RWPE1 (cell line): ENCODE measurements at regions of chr13 and their contacts with region 1.

Region 1: GRCh38 chr13:25329706-25330105 is 28.3 kb downstream of the NUP58 start:
- DNase-seq: no peak
- H3K27ac ChIP-seq: peak overlapping the region; percentile 42; the same call in 1 of the 2 replicates
- CTCF ChIP-seq: no peak

Region 2: DNA sequence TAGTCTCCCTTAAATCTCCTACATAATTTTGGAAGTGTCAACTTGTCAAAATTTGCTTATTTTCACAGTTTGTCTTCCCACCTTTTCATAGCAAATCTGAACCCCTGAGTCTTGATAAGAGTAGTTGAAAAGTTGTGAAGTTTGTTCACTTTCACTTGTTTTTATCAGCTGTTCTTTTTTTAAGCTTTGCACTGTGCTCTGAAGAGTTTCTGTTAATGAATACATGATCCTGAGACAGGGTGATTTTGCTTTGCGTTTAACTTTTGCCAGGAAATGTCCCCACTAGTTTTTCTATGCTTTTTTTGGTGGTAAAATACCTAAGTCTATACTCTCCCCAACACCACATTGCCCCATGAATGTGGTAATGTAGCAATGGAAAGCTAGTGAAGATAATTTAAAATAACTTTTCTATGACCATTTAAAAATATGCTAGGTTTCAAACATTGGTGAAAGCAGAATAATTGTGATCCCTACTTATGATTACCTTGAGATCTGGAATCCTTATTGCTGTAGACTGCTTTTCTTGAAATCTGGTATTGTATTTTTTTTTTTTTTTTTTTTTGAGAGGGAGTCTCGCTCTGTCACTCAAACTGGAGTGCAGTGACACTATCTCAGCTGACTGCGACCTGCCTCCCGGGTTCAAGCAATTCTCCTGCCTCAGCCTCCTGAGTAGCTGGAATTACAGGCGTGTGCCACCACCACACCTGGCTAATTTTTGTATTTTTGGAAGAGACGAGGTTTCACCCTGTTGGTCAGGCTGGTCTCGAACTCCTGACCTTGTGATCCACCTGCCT is 22.8 kb before region 1 on chr13:
- CTCF ChIA-PET with region 1: no interaction called
- POLR2A ChIA-PET with region 1: interaction called, 11 read pairs
- DNase-seq: no peak
- H3K27ac ChIP-seq: no peak overlapping the region
- CTCF ChIP-seq: no peak